ENCODE measurements at regions of chr22 and their contacts with region 1.

Region 1: DNA sequence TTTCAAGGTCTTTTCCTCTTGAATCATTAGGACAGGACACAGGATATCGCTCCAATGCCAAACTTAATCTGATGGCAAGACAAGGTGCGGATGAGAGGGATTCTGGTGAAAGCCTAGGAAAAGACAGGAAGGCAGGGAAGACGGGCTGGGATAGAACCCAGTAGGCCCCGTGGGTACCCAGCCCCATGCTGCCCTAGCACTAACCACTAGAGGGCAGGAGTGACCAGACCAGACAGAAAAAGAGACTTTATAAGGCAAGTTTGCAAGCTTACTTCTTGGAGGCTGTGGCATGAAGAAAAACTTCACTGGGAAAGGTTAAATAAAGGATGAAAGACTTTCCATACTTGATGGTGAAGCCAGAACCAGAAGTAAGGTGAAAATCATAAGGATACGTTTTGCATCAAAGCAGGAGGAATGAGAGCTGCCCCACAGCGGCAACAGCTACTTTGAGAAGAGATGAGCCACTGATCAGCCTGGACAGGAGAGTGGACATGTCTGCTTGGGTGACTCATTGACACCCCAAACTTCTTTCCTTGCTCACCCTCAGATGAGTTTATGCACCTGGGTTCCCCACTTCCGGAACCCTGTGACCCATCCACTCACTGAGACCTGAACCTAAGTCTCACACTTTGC is 39.8 kb downstream of the SYN3 start:
- DNase-seq: peak; percentile 8
- ATAC-seq: peak; percentile 88
- H3K4me3 ChIP-seq: no peak overlapping the region
- H3K27ac ChIP-seq: no peak overlapping the region
- H3K4me1 ChIP-seq: no peaks in the 10 kb centered on the region
- H3K27me3 ChIP-seq: no peaks in the 10 kb centered on the region
- CTCF ChIP-seq: peak; percentile 85 to 90 (median 87)
- EP300 ChIP-seq: no peak
- POLR2A ChIP-seq: no peak
- RAD21 ChIP-seq: peak; percentile 83

Region 2: DNA sequence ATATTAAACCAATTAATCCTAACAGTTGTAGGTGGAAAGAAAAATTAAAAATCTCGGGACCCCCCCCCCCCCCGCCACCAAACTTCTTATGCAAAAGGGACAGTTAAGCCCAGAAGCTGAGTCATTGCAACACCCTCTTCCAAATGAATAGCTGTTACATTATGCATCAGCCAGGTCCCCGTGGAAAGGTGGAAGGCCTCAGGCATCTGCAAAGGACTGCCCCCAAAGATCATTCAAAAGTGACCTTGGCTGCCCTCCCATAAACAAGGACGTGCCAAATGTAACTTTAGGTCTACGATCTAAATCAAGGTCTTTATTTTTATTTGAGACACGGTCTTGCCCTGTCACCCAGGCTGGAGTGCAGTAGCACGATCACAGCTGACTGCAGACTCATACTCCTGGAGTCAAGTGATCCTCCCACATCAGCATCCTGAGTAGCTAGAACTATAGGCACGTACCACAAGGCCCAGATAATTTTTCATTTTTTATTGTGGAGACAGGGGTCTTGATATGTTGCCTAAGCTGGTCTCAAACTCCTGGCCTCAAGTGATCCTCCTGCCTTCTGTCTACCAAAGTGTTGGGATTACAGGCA is 17.0 kb after region 1 on chr22:
- CTCF ChIA-PET with region 1: interaction called, 10 read pairs
- POLR2A ChIA-PET with region 1: no interaction called
- RAD21 ChIA-PET with region 1: no interaction called
- SMC1A ChIA-PET with region 1: interaction called, 5 read pairs
- in situ Hi-C with region 1: no loop called
- intact Hi-C with region 1: no loop called
- DNase-seq: no peak
- ATAC-seq: no peak
- H3K4me3 ChIP-seq: no peak overlapping the region
- H3K27ac ChIP-seq: no peak overlapping the region
- H3K4me1 ChIP-seq: no peaks in the 10 kb centered on the region
- H3K27me3 ChIP-seq: no peaks in the 10 kb centered on the region; a peak in 2 of 4 replicates
- CTCF ChIP-seq: no peak
- EP300 ChIP-seq: no peak
- POLR2A ChIP-seq: no peak
- RAD21 ChIP-seq: no peak

Region 3: GRCh38 chr22:33044112-33044511 is 25.8 kb after region 1 on chr22:
- CTCF ChIA-PET with region 1: interaction called, 42 read pairs
- POLR2A ChIA-PET with region 1: no interaction called
- RAD21 ChIA-PET with region 1: interaction called, 19 read pairs
- SMC1A ChIA-PET with region 1: interaction called, 25 read pairs
- in situ Hi-C with region 1: no loop called
- intact Hi-C with region 1: loop called (anchors 1 kb)
- DNase-seq: no peak
- ATAC-seq: no peak
- H3K4me3 ChIP-seq: no peak overlapping the region
- H3K27ac ChIP-seq: no peak overlapping the region
- H3K4me1 ChIP-seq: no peaks in the 10 kb centered on the region
- H3K27me3 ChIP-seq: no peaks in the 10 kb centered on the region
- CTCF ChIP-seq: no peak
- EP300 ChIP-seq: no peak
- POLR2A ChIP-seq: no peak
- RAD21 ChIP-seq: no peak

Region 4: GRCh38 chr22:33049119-33049729 is 30.9 kb after region 1 on chr22:
- CTCF ChIA-PET with region 1: interaction called, 42 read pairs
- POLR2A ChIA-PET with region 1: no interaction called
- RAD21 ChIA-PET with region 1: interaction called, 19 read pairs
- SMC1A ChIA-PET with region 1: interaction called, 25 read pairs
- in situ Hi-C with region 1: no loop called
- intact Hi-C with region 1: loop called (anchors 1 kb)
- DNase-seq: peak; percentile 5
- ATAC-seq: peak; percentile 90
- H3K4me3 ChIP-seq: no peak overlapping the region
- H3K27ac ChIP-seq: no peak overlapping the region
- H3K4me1 ChIP-seq: no peaks in the 10 kb centered on the region
- H3K27me3 ChIP-seq: peaks cover 0 to 10% of the 10 kb centered on the region in 2 experiments; a peak in 2 of 4 replicates
- CTCF ChIP-seq: peak; percentile 81 to 94 (median 90)
- EP300 ChIP-seq: no peak
- POLR2A ChIP-seq: no peak
- RAD21 ChIP-seq: peak; percentile 57

Region 5: GRCh38 chr22:33083212-33083611 is 64.9 kb after region 1 on chr22:
- CTCF ChIA-PET with region 1: interaction called, 12 read pairs
- POLR2A ChIA-PET with region 1: no interaction called
- RAD21 ChIA-PET with region 1: no interaction called
- SMC1A ChIA-PET with region 1: interaction called, 3 read pairs
- in situ Hi-C with region 1: no loop called
- intact Hi-C with region 1: no loop called
- DNase-seq: peak; percentile 13
- ATAC-seq: peak; percentile 80
- H3K4me3 ChIP-seq: no peak overlapping the region
- H3K27ac ChIP-seq: no peak overlapping the region
- H3K4me1 ChIP-seq: no peaks in the 10 kb centered on the region
- H3K27me3 ChIP-seq: no peaks in the 10 kb centered on the region
- CTCF ChIP-seq: peak in 1 of 3 experiments; percentile 36; a peak in 4 of 6 replicates
- EP300 ChIP-seq: no peak
- POLR2A ChIP-seq: no peak
- RAD21 ChIP-seq: 0 out of 2 replicates have a peak, but pooled peaks have one; percentile 25

Region 6: DNA sequence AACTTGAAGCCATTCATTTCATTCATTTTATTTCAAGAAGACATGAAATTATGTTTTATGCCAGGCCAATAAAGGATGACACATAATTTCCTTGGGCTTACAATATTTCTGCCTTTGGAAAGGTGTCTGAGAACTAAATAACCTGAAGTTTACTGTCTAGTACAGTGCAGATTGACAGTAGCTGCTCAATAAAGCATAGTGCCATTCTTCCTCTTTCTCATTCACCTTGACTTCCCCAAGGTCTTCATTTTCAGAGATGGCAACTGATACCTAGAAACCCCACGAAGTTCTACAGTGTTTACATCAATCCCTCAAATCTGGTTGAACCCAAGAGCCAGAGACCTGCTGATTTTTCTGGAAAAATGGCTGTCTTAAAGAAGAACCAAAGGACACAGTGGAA is 184.1 kb after region 1 on chr22:
- CTCF ChIA-PET with region 1: interaction called, 113 read pairs
- POLR2A ChIA-PET with region 1: no interaction called
- RAD21 ChIA-PET with region 1: interaction called, 31 read pairs
- SMC1A ChIA-PET with region 1: interaction called, 54 read pairs
- in situ Hi-C with region 1: loop called (anchors 5 kb)
- intact Hi-C with region 1: loop called (anchors 1 kb)
- DNase-seq: no peak
- ATAC-seq: no peak
- H3K4me3 ChIP-seq: no peak overlapping the region
- H3K27ac ChIP-seq: no peak overlapping the region
- H3K4me1 ChIP-seq: peaks cover 4% of the 10 kb centered on the region; the same call in 1 of the 2 replicates
- H3K27me3 ChIP-seq: no peaks in the 10 kb centered on the region
- CTCF ChIP-seq: no peak
- EP300 ChIP-seq: no peak
- POLR2A ChIP-seq: no peak
- RAD21 ChIP-seq: no peak

Region 7: GRCh38 chr22:33209930-33210784 is 191.8 kb after region 1 on chr22:
- CTCF ChIA-PET with region 1: interaction called, 113 read pairs
- POLR2A ChIA-PET with region 1: no interaction called
- RAD21 ChIA-PET with region 1: interaction called, 23 read pairs
- SMC1A ChIA-PET with region 1: interaction called, 54 read pairs
- in situ Hi-C with region 1: loop called (anchors 5 kb)
- intact Hi-C with region 1: loop called (anchors 1 kb)
- DNase-seq: no peak
- ATAC-seq: peak; percentile 98
- H3K4me3 ChIP-seq: no peak overlapping the region
- H3K27ac ChIP-seq: no peak overlapping the region
- H3K4me1 ChIP-seq: no peaks in the 10 kb centered on the region
- H3K27me3 ChIP-seq: no peaks in the 10 kb centered on the region
- CTCF ChIP-seq: peak; percentile 69 to 72 (median 70)
- EP300 ChIP-seq: no peak
- POLR2A ChIP-seq: no peak
- RAD21 ChIP-seq: peak; percentile 77

Measured in GM12878 (cell line).